HepG2 (cell line): ENCODE measurements at regions of chr6 and their contacts with region 1.

Region 1: DNA sequence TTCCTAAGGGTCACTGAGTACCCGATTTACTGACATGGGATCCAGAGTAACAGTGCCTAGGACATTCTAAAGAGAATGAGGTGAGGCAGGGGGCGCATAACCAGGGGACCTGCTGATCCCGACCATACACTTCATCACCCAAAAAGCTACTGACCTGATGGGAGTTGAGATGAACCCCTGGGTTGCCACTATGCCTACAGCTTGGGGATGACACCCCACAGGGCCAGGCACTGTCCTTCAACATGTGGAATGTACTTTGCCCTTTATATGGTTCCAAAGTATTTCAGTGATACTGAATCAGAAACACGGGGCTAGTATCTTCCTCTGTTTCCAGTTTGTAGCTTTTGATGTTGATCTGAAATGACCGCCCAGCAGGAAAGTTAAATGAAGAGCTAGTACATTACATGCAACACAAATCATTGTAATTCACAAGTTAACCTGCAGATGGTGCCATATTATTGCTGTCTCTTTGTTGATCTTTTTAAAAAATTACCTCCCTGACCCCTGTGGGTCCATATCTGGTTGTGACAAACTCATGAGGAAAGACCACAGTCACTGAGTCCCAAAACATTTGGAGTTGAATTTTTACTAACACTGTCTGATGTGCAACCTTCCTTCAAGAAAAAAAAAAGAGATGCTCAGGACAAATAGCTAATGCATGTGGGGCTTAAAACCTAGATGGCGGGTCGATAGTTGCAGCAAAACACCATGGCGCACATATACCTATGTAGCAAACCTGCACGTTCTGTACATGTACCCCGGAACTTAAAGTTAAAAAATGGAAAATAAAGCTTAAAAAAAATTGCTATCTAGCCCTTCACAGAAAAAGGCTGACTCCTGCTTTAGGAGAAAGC is 42.7 kb upstream of the GCNT2 start:
- DNase-seq: peak; percentile 58
- ATAC-seq: peak; percentile 67
- H3K4me3 ChIP-seq: no peak overlapping the region
- H3K27ac ChIP-seq: no peak overlapping the region
- H3K4me1 ChIP-seq: no peaks in the 10 kb centered on the region
- H3K27me3 ChIP-seq: peaks cover 0 to 7% of the 10 kb centered on the region in 2 experiments; a peak in 1 of 5 replicates
- CTCF ChIP-seq: peak; percentile 78
- EP300 ChIP-seq: no peak
- POLR2A ChIP-seq: no peak
- RAD21 ChIP-seq: peak; percentile 54; the same call in 1 of the 2 replicates

Region 2: DNA sequence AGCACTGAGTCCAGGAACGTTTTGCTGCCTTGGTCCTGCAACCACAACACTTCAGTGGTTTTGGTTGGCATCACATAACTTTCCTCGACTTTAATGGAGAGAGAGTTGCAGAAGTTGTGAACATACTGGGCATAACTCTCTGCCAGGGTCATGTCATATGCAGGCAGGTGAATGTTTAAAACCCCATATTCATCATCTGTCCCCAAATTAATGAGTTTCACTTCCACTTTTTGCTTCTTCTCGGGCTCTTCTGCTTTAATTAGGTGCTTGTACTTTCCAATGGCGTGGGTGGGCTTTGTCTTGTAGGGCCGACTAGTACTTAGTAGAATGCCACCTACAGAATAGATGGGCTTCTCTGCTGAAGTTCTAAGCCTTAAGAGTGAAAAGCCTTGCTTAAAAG is 18.3 kb before region 1 on chr6:
- CTCF ChIA-PET with region 1: no interaction called
- POLR2A ChIA-PET with region 1: no interaction called
- in situ Hi-C with region 1: no loop called
- intact Hi-C with region 1: no loop called
- DNase-seq: no peak
- ATAC-seq: no peak
- H3K4me3 ChIP-seq: no peak overlapping the region
- H3K27ac ChIP-seq: no peak overlapping the region
- H3K4me1 ChIP-seq: no peaks in the 10 kb centered on the region
- H3K27me3 ChIP-seq: peaks cover 0 to 19% of the 10 kb centered on the region in 2 experiments; a peak in 2 of 5 replicates
- CTCF ChIP-seq: no peak
- EP300 ChIP-seq: no peak
- POLR2A ChIP-seq: no peak
- RAD21 ChIP-seq: no peak

Region 3: DNA sequence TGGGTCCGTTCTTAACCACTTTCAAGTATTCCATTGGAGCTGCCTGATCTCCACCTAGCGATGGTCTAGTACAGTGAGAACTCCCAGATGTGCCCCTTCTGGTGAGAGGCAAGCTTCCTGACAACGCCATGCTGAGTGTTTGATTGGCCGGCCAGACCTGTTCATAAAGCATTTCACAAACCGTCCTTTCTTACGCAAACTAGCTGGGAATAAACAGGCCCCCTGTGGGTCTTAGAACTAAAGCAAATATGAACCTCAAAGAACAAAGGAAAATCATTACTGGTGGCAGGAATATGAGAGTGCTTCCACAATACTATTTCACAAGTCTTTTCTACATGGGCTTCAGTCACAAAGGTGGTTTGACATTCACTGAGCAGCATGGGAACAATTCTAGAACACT is 27.1 kb after region 1 on chr6:
- CTCF ChIA-PET with region 1: interaction called, 4 read pairs
- POLR2A ChIA-PET with region 1: interaction called, 4 read pairs
- in situ Hi-C with region 1: no loop called
- intact Hi-C with region 1: loop called (anchors 2 kb)
- DNase-seq: peak; percentile 99
- ATAC-seq: peak; percentile 99
- H3K4me3 ChIP-seq: no peak overlapping the region
- H3K27ac ChIP-seq: no peak overlapping the region
- H3K4me1 ChIP-seq: peaks cover 24% of the 10 kb centered on the region
- H3K27me3 ChIP-seq: peaks cover 0 to 36% of the 10 kb centered on the region in 2 experiments; a peak in 4 of 5 replicates
- CTCF ChIP-seq: peak; percentile 64
- EP300 ChIP-seq: peak; percentile 91 to 95
- POLR2A ChIP-seq: no peak
- RAD21 ChIP-seq: peak; percentile 64; the same call in 1 of the 2 replicates

Region 4: GRCh38 chr6:10552270-10552810 is 73.9 kb after region 1 on chr6:
- CTCF ChIA-PET with region 1: no interaction called
- POLR2A ChIA-PET with region 1: no interaction called
- in situ Hi-C with region 1: no loop called
- intact Hi-C with region 1: no loop called
- DNase-seq: no peak
- ATAC-seq: no peak
- H3K4me3 ChIP-seq: no peak overlapping the region
- H3K27ac ChIP-seq: no peak overlapping the region
- H3K4me1 ChIP-seq: no peaks in the 10 kb centered on the region
- H3K27me3 ChIP-seq: no peaks in the 10 kb centered on the region
- CTCF ChIP-seq: no peak
- EP300 ChIP-seq: no peak
- POLR2A ChIP-seq: no peak
- RAD21 ChIP-seq: no peak

Region 5: DNA sequence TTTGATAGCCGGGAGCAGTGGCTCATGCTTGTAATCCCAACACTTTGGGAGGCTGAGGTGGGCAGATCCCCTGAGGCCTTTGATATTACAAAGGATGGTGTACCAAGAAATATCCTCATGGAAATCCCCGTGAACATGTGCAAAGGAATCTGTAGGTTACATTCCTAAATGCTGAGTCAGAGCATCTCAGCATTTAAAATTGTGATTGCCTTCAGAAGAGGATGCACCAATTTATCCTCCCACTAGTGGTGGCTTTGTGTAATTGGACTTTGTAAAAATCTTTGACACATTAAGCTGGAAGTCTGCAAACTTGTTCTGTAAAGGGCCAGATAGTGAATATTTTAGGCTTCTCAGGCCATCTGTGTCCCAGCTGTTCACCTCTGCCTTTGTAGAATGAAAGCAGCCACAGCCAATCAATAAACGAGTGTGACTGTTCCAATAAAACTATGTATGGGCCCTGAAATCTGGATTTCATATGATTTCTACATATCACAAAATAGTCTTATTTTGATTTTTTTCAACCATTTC is 281.0 kb after region 1 on chr6:
- CTCF ChIA-PET with region 1: interaction called, 7 read pairs
- POLR2A ChIA-PET with region 1: no interaction called
- in situ Hi-C with region 1: no loop called
- intact Hi-C with region 1: loop called (anchors 1 kb)
- DNase-seq: peak; percentile 88
- ATAC-seq: peak; percentile 88
- H3K4me3 ChIP-seq: no peak overlapping the region
- H3K27ac ChIP-seq: peak overlapping the region; percentile 5
- H3K4me1 ChIP-seq: peaks cover 26% of the 10 kb centered on the region
- H3K27me3 ChIP-seq: no peaks in the 10 kb centered on the region
- CTCF ChIP-seq: peak; percentile 33
- EP300 ChIP-seq: no peak
- POLR2A ChIP-seq: no peak
- RAD21 ChIP-seq: no peak

Region 6: DNA sequence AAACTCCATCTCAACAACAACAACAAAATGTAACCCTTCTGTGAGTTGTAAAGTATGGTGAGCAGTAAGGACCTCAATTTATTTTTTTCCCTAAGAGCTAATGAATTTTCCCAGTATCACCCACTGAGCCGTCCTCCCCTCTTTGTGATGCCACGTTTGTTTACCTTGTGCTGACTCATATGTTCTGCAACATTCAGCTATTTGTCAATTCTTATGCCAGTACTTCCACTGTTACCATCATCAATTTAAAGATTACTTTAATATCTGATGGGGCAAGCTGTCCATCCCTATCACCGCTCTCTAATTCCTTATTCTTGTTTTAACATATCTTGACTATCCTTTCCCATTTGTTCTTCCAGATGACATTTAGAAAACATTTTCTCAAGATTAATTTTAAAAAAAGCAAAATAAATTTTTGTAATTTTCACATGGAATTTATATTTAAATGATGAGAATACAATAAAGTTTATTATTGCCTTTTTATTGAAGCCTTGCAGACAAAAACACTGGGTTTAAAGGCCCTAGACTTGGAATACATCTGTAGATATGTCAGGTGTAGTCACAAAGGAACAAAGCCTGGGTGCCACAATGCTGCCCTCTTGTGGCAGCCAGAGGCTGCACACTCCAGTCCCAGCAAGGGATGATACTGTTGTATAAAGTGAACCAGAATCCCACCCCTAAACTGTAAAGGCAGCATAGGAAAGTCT is 322.6 kb after region 1 on chr6:
- CTCF ChIA-PET with region 1: interaction called, 41 read pairs
- POLR2A ChIA-PET with region 1: no interaction called
- in situ Hi-C with region 1: loop called (anchors 5 kb)
- intact Hi-C with region 1: loop called (anchors 1 kb)
- DNase-seq: peak; percentile 68
- ATAC-seq: peak; percentile 100
- H3K4me3 ChIP-seq: no peak overlapping the region
- H3K27ac ChIP-seq: no peak overlapping the region
- H3K4me1 ChIP-seq: peaks cover 7% of the 10 kb centered on the region; the same call in 1 of the 2 replicates
- H3K27me3 ChIP-seq: no peaks in the 10 kb centered on the region
- CTCF ChIP-seq: peak; percentile 95
- EP300 ChIP-seq: no peak
- POLR2A ChIP-seq: no peak
- RAD21 ChIP-seq: peak; percentile 87

Region 7: GRCh38 chr6:11050731-11051130 is 572.3 kb after region 1 on chr6:
- CTCF ChIA-PET with region 1: no interaction called
- POLR2A ChIA-PET with region 1: no interaction called
- in situ Hi-C with region 1: loop called (anchors 25 kb)
- intact Hi-C with region 1: no loop called
- DNase-seq: no peak
- ATAC-seq: no peak
- H3K4me3 ChIP-seq: no peak overlapping the region
- H3K27ac ChIP-seq: no peak overlapping the region
- H3K4me1 ChIP-seq: peaks cover 29% of the 10 kb centered on the region
- H3K27me3 ChIP-seq: no peaks in the 10 kb centered on the region
- CTCF ChIP-seq: no peak
- EP300 ChIP-seq: no peak
- POLR2A ChIP-seq: no peak
- RAD21 ChIP-seq: no peak